Gastrocnemius medialis (tissue), 4 donors: ENCODE measurements at regions of chr10 and their contacts with region 1.

Region 1: DNA sequence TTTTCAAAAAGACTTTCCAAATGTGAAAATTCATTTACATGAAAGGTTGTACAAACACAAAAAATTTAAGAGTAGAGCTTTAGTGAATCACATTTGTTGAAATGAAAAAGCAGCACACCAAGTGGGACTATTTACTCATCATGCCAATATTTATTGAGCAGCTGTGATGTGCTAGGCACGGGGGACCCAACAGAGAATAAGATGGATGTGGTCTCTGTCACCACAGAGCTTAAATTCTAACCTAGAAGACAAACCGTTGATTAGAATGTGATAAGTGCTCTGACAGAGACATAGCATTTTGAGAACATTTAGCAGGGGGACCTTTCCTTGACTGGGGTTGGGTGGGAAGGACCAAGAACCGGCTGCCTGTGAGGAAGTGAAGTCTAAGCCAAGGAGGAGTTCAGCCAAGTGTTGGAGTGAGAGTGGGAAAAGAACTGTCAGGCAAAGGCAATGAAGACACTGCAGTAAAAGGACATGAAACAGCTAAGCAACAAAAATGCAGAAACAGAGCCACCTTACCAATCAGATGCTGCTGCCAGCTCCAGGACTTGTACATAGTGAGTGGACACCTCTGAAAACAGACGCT is 19.1 kb downstream of the ADAM12 start:
- DNase-seq: no peak
- ATAC-seq: no peak
- H3K4me3 ChIP-seq: no peak overlapping the region
- H3K27ac ChIP-seq: no peak overlapping the region
- H3K4me1 ChIP-seq: no peaks in the 10 kb centered on the region
- H3K27me3 ChIP-seq: no peaks in the 10 kb centered on the region
- CTCF ChIP-seq: no peak
- POLR2A ChIP-seq: no peak

Region 2: DNA sequence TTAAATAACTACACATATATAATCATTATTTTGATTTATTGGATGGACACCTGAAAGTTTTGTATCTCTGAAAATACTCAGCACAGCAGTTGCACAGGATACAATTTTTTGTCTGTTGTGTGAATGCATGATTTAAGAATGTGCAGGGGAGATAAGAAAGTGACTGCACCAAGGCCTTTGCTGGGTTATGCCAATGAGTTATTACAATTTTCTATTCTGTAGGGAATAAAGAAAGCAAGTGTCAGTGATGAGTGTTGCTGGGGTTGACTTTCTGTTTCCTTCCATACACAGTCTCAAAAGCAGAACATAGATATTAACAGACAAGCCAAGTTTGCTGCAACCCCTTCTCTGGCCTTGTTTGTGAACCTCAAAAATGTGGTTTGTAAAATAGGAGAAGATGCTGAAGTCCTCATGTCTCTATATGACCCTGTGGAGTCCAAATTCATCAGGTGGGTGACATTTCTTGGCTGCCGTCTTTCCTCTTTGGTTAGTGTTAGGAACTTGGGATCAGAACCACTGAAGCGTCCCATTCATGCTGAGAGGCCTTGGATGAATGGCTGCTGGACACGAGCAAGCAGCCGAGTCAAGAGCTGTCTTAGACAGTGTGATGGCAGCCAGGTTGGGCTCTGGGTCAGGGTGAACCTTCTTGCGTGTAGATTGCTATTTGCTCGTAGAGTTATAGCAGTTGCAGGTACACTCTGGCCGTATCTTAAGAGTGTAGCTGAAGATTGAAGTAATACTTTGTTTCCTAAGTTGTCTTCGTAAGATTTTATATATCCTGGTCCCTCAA is 628.8 kb after region 1 on chr10:
- in situ Hi-C with region 1: no loop called
- intact Hi-C with region 1: loop called (anchors 5 kb)
- DNase-seq: no peak
- ATAC-seq: no peak
- H3K4me3 ChIP-seq: no peak overlapping the region
- H3K27ac ChIP-seq: no peak overlapping the region
- H3K4me1 ChIP-seq: no peaks in the 10 kb centered on the region
- H3K27me3 ChIP-seq: no peaks in the 10 kb centered on the region
- CTCF ChIP-seq: no peak
- POLR2A ChIP-seq: no peak